Activated T-helper 1 cell treated with anti-CD3 and anti-CD28 coated beads, Interleukin-12 subunit alpha, Interleukin-12 subunit beta, Interleukin-2, Interleukin-4 antibody, amounts not matched to agents 30 ng/mL and 10 ng/mL and 1 ng/mL, durations not matched to agents 14 hours and 24 hours and 36 hours (primary cell): ENCODE measurements at regions of chr6 and their contacts with region 1.

Region 1: DNA sequence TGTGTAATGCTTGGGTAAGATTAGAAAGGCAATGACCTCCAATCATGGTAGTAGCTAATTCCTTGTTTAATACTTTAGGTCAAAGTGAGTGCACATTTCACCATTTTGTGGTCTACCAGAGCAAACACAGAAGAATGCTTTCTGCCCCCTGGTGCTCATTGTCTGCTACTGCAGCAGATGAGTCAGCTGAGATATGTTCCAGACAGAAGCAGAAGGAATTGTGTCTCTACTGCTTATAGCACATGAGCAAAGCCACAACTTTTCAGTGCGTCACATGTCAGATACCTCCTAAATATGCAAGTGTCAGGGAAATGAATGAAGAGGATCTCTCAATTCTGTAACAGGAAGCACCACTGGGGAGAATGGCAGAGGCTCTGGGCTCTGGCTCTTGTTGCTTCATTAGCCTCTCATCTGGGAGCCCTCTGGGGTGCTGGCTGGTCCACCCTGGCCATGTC is 308.9 kb downstream of the ALDH8A1 start:
- DNase-seq: peak; percentile 65
- H3K4me3 Mint-ChIP-seq: no peak overlapping the region
- H3K27ac Mint-ChIP-seq: no peak overlapping the region
- H3K4me1 Mint-ChIP-seq: peaks cover 33% of the 10 kb centered on the region
- H3K27me3 Mint-ChIP-seq: no peaks in the 10 kb centered on the region

Region 2: DNA sequence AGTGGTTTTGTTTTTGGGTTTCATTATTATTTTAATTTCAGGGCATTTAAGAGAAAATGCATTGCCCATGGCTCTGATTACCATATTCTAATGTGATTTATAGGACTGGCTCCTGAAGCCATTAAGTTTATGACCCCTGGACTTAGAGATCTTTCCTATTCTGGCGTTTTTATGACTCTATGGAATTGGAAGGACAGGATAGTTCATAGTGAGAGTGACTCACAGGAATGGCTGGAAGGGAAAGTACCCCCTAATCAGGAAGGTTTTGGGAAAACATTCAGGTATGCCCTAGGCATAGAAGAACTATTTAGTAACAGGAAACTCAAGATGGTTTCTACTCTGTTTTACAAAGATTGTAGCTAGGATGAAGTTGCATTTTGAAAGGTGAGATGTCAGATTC is 480.0 kb before region 1 on chr6:
- intact Hi-C with region 1: loop called (anchors 1 kb)
- DNase-seq: no peak
- H3K4me3 Mint-ChIP-seq: no peak overlapping the region
- H3K27ac Mint-ChIP-seq: no peak overlapping the region
- H3K4me1 Mint-ChIP-seq: peaks cover 5% of the 10 kb centered on the region
- H3K27me3 Mint-ChIP-seq: no peaks in the 10 kb centered on the region

Region 3: DNA sequence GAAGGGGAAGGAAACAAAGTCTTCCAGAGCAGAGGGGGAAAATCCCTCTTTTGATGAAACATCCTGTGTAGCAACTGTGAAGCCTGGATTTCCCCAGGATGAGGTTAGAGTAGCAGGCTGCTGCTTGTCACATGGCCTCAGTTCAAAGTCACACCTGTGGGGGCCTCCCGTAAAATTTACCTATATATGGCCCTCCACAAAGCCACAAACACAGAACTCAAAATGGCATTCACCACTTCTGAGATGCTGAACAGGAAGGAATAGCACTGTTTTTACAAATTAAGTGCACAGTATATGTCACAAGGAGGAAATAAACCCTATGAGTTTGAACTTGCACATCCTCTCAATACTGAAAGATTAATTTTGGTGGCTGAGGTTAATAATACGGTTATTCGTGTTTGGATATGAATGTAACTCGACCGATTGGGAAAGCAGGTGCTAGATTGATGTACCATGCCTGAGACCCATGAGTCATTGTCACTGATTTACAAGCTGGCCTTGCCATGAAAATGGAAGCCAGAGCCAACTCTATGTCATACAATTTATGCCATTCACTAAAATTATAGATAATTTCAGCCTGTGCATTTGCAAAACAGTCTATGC is 393.7 kb before region 1 on chr6:
- intact Hi-C with region 1: loop called (anchors 1 kb)
- DNase-seq: peak; percentile 82
- H3K4me3 Mint-ChIP-seq: peak overlapping the region; percentile 37
- H3K27ac Mint-ChIP-seq: peak overlapping the region; percentile 91
- H3K4me1 Mint-ChIP-seq: peaks cover 58% of the 10 kb centered on the region
- H3K27me3 Mint-ChIP-seq: no peaks in the 10 kb centered on the region

Region 4: DNA sequence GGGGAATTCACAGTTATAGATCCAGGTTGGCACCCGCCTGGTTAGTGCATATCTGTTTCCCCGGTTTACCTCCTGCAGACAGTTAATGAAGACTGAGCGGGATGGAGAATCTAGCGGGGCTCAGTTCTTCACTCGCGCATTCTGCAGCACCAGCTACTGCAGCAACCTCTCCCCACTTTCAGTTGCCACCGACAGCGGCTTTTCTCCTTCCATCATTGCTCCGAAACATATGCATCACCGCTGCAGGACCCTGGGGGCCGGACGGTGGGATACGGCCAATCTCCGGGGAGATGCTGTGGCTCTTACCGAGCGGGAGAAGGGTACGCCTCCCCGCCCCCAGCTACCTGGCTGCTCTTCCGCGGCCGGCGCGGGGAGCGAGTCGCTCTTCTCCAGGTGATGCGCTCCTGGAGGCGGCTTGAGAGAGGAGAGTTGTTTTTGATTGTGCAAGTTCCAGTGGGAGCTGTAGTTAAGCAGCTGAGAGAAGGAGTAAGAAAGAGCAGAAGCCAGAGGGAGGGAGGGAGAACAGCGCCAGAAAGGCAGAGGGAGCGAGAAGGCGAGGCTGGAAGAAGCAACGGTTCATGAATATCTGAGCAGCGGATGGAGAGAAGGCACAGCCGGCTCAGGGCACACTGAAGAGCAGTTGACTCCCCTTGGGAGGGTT is 323.4 kb before region 1 on chr6 and contains the start of gene SGK1:
- intact Hi-C with region 1: loop called (anchors 10 kb)
- DNase-seq: peak; percentile 3
- H3K4me3 Mint-ChIP-seq: peak within 1 kb of the TSS; percentile 91
- H3K27ac Mint-ChIP-seq: peak within 1 kb of the TSS; percentile 57
- H3K4me1 Mint-ChIP-seq: peaks cover 39% of the 10 kb centered on the region
- H3K27me3 Mint-ChIP-seq: peaks cover 16% of the 10 kb centered on the region
- total RNA-seq, gene SGK1: 48.7 and 50.2 TPM in 2 replicates

Region 5: DNA sequence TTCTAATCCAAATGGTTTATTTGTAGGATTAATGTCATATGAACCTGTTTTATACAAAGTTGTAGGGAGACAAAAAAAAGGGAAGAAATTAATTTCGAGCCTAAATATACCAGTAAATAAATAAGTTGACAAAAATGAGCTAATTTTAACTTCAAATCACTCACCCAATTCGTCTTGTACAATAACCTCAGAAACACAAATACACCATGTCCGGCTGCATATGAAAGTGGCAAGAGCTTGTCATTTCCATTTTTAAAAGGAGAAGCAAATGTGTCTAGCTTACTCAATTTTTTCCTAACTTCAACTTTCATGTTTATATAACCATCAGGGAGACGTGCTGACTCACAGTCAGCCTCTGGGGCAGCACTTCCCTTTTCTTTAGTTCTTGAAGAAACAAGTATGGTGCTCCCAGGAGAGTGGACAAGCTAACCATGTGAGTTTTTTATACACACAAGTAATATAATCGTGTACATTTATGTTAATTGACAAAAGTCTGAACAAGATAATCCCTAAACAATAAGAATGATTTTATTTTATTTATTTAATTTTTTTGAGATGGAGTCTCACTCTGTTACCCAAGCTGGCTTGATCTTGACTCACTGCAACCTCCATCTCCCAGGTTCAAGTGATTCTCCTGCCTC is 267.6 kb before region 1 on chr6:
- intact Hi-C with region 1: loop called (anchors 2 kb)
- DNase-seq: no peak
- H3K4me3 Mint-ChIP-seq: peak overlapping the region; percentile 47
- H3K27ac Mint-ChIP-seq: peak overlapping the region; percentile 57
- H3K4me1 Mint-ChIP-seq: peaks cover 46% of the 10 kb centered on the region
- H3K27me3 Mint-ChIP-seq: no peaks in the 10 kb centered on the region

Region 6: GRCh38 chr6:134502614-134503549 is 138.1 kb before region 1 on chr6:
- intact Hi-C with region 1: no loop called
- DNase-seq: no peak
- H3K4me3 Mint-ChIP-seq: no peak overlapping the region
- H3K27ac Mint-ChIP-seq: no peak overlapping the region
- H3K4me1 Mint-ChIP-seq: peaks cover 6% of the 10 kb centered on the region
- H3K27me3 Mint-ChIP-seq: no peaks in the 10 kb centered on the region

Region 7: DNA sequence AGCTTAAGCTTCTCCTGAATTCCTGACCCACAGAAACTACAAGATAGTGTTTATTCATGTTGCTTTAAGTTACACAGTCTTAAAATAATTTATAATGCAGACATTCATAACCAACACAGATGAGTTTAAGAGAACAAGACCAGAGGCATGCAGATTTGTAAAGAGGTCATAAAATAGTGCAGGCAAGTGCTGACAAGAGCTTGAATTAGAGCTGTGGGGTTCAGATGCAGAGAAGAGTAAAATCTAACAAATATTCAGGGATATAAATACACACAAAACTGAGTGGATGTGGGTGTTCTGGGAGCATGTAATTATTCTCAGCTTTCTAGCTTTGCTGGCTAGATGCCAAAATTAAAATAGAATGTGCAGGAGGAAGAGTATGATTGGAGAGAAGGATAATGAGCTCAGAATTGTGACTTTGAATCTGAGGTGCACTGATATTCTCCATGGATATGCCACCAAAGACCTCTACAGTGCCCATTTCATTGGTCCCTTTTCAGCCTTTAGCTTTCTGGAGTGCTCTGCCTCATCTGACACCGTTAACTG is 31.2 kb before region 1 on chr6:
- intact Hi-C with region 1: no loop called
- DNase-seq: no peak
- H3K4me3 Mint-ChIP-seq: no peak overlapping the region
- H3K27ac Mint-ChIP-seq: no peak overlapping the region
- H3K4me1 Mint-ChIP-seq: no peaks in the 10 kb centered on the region
- H3K27me3 Mint-ChIP-seq: no peaks in the 10 kb centered on the region

Region 8: DNA sequence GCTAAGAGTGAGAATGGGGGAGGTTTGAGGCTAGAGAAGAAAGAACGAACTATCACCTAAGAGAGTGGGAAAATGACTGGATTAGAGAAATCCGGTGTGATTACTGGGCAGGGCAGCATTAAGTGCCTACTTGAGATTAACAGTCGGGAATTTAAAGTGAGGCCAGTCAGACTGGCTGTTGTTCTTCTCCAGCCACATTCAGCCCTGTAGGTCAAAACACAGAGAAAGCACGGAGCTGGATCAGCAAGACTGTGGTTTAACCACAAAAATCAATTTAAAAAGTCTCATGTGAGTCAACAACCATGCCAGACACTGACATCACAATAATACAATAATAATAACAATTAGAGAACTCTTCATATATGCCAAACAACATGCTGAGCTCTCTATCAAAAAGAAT is 21.2 kb before region 1 on chr6:
- intact Hi-C with region 1: no loop called
- DNase-seq: no peak
- H3K4me3 Mint-ChIP-seq: no peak overlapping the region
- H3K27ac Mint-ChIP-seq: no peak overlapping the region
- H3K4me1 Mint-ChIP-seq: peaks cover 15% of the 10 kb centered on the region
- H3K27me3 Mint-ChIP-seq: peaks cover 5% of the 10 kb centered on the region

Region 9: DNA sequence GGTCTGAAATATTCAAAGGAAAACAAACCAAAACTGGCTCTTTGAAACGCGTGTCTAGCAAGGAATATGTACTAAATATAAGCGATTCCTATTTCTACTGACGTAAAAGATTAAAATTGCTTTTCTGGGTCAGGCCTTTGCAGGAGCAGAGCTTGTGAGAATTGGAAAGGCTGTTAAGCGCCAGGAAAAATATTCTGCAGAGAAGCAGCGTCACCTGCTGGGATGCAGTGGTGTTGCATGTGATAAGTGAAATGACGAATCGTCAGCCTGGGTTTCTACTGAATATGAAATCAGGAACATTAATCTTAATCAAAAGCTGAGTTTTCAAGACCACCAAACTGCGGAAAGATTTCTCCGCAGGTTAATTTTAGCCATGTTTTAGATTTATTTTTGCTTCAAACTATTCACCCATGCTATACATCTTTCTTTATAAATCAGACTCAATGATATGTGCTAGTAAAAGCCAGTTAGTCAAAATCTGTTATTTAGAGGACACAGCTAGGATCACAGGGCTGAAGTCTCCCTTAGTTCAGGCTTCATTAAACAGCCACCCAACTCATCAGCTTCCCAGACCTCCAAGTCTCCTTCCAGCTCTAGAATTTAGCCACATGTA is 241.5 kb after region 1 on chr6:
- intact Hi-C with region 1: loop called (anchors 5 kb)
- DNase-seq: peak; percentile 31
- H3K4me3 Mint-ChIP-seq: no peak overlapping the region
- H3K27ac Mint-ChIP-seq: no peak overlapping the region
- H3K4me1 Mint-ChIP-seq: no peaks in the 10 kb centered on the region
- H3K27me3 Mint-ChIP-seq: peaks cover 24% of the 10 kb centered on the region

Region 10: DNA sequence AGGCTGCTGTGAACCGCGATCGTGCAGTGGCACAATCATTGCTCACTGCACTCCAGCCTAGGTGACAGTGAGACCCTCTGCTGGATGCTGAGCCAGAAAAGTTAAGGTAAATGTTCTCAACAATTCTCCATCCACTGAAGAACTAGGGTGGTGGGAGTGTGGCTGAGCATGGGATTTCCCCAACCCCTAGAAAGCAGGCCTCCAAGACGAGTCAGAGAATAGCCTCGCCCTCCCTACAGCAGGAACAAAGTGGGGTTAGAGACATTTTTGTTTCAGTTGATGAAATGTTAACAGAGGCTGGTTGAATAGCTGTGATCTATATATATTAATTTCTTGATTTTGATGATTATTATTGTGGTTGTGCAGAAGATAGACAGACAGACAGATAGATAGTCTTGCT is 315.0 kb after region 1 on chr6:
- intact Hi-C with region 1: no loop called
- DNase-seq: no peak
- H3K4me3 Mint-ChIP-seq: no peak overlapping the region
- H3K27ac Mint-ChIP-seq: no peak overlapping the region
- H3K4me1 Mint-ChIP-seq: peaks cover 20% of the 10 kb centered on the region
- H3K27me3 Mint-ChIP-seq: no peaks in the 10 kb centered on the region